Ascending aorta (tissue), 2 donors: ENCODE measurements at regions of chr7 and their contacts with region 1.

Region 1: GRCh38 chr7:75878769-75879611 is at the start of gene RHBDD2:
- DNase-seq: peak; percentile 84 to 98
- H3K4me3 ChIP-seq: peak within 1 kb of the TSS; percentile 67 to 93
- H3K27ac ChIP-seq: peak within 1 kb of the TSS; percentile 71 to 72
- H3K4me1 ChIP-seq: peaks cover 0 to 10% of the 10 kb centered on the region in 2 donors
- H3K27me3 ChIP-seq: no peaks in the 10 kb centered on the region
- CTCF ChIP-seq: peak in 1 of 3 experiments; percentile 35
- total RNA-seq, gene RHBDD2: 51.7 TPM

Region 2: GRCh38 chr7:75738987-75739795 is 139.8 kb before region 1 on chr7:
- intact Hi-C with region 1: loop called (anchors 5 kb)
- DNase-seq: peak; percentile 98 to 100
- H3K4me3 ChIP-seq: peak overlapping the region; percentile 79 to 81
- H3K27ac ChIP-seq: peak overlapping the region; percentile 76 to 84
- H3K4me1 ChIP-seq: peaks cover 0 to 18% of the 10 kb centered on the region in 2 donors
- H3K27me3 ChIP-seq: no peaks in the 10 kb centered on the region
- CTCF ChIP-seq: peak in 1 of 3 experiments; percentile 60

Region 3: GRCh38 chr7:75814407-75814947 is 64.5 kb before region 1 on chr7:
- intact Hi-C with region 1: no loop called
- DNase-seq: no peak
- H3K4me3 ChIP-seq: no peak overlapping the region
- H3K27ac ChIP-seq: no peak overlapping the region
- H3K4me1 ChIP-seq: no peaks in the 10 kb centered on the region
- H3K27me3 ChIP-seq: no peaks in the 10 kb centered on the region
- CTCF ChIP-seq: no peak

Region 4: DNA sequence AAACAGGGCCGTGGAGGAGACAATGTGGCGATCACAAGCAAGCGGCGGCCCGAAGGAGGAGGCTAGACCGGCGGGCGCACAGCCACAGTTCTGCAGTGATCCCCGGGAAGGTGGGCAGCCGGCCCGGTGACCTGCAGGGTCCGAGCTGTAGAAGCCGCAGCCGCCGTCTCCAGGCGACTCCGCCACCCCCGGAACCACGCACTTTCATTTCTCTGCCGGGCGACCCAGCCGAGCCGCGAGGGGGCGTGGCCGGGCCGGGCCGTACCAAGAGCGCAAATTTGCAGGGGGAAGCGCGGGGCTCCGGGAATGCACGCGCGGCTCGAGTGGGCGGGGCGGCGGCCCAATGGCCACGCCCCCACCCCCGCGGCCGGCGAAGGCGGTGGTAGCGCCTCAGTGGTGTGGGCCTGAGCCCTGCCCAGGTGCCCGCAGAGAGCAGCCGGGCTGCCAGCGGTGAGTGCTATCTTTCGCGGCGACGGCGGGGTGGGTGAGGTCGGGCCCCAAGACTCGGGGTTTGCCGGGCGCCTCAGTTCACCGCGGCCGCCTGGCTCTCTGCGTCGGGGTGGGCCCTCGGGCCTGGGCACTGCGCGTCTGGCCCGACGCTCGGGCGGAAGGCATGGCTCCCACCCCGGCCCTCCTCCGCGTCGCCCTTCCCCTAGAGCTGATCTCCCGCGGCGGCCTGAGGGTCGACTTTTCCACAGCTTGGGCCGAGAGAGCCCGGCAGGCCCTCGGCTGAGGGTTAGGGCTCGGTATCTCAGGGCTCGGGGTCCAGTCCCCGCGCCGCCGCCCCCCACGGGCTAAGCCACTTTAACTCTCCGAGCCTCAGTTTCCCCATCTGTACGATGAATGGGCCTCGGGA is 36.0 kb after region 1 on chr7 and contains the start of gene POR:
- intact Hi-C with region 1: loop called (anchors 1 kb)
- DNase-seq: peak; percentile 80 to 96
- H3K4me3 ChIP-seq: peak within 1 kb of the TSS; percentile 81 to 84
- H3K27ac ChIP-seq: peak within 1 kb of the TSS; percentile 81 to 84
- H3K4me1 ChIP-seq: peaks cover 3 to 5% of the 10 kb centered on the region in 2 donors
- H3K27me3 ChIP-seq: no peaks in the 10 kb centered on the region
- CTCF ChIP-seq: peak in 2 of 3 experiments; percentile 3 to 11
- total RNA-seq, gene POR: 236 TPM

Region 5: DNA sequence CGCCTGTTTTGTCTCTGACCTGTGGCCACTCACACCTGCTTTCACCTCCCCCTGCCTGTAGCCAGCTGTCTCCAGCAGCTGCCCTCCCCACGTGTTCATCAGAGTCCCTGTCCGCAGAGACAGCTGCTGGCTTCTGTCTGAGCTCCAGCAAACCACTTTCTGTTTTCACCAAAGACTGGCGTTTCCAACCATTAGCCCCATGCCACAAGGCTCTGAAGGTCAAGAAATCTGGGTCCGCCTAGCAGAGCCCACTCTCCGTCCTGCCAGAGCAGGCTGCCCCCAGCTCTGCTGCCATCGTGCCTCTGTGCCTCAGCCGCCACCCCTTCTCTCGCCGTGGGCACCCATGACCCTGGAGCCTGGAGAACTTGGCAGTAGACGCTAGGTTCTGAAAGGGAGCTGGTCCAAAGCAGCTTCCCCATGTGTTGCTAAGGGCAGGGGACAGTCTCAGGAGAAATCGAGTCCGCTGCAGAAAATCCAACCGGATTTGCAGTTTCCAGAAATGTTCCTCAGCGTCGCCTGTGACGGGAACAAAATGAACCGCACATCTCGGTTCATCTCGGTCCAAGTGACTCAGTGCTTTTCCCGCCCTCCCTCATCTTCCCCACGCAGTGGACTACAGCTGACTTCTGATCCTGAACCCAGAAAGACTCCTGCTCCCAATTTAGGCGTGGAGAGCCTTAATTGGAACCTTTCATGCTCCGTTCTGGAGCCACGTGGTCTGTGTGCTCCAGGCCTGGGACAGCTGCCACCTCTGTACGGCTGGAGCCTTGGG is 87.4 kb after region 1 on chr7:
- intact Hi-C with region 1: loop called (anchors 1 kb)
- DNase-seq: peak; percentile 63 to 92
- H3K4me3 ChIP-seq: peak overlapping the region; percentile 15 to 54
- H3K27ac ChIP-seq: peak overlapping the region; percentile 92 to 97
- H3K4me1 ChIP-seq: peaks cover 20 to 44% of the 10 kb centered on the region in 2 donors
- H3K27me3 ChIP-seq: no peaks in the 10 kb centered on the region
- CTCF ChIP-seq: no peak

Region 6: DNA sequence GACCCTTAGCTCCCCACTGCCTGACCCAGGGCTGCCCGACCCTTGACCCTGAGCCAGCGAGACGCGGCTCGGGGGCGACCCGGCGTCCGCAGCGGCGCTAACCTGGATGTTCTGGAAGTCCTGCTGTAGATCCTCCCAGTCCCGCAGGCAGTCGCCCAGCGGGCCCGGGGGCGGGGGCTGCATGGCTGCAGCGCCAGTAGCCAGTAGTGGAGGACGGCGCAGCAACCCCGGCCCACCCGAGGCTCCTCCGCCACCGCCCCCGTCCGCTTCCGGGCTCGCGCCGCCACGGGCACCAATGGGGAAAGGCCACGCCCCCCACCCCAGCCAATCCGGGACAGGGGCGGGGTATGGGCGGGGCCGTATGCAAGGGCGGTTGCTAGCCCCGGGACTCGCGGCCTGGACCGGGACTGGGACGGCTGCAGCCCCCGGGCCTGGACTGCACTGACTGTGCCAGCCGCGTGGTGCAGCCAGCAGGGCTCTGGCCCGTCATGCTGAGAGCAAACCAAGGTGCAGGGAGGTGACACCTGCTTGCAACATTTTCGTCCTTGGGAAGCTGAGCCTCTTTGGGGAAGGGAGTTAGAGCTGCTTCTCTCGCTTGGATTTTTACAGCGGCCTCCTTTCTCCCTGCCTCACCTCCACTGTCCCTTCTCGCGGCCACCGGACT is 115.5 kb after region 1 on chr7 and contains the start of gene TMEM120A:
- intact Hi-C with region 1: loop called (anchors 1 kb)
- DNase-seq: peak; percentile 84 to 98
- H3K4me3 ChIP-seq: peak within 1 kb of the TSS; percentile 92 to 93
- H3K27ac ChIP-seq: peak within 1 kb of the TSS; percentile 99 to 100
- H3K4me1 ChIP-seq: peaks cover 10 to 25% of the 10 kb centered on the region in 2 donors
- H3K27me3 ChIP-seq: no peaks in the 10 kb centered on the region
- CTCF ChIP-seq: peak; percentile 29 to 42 (median 31)
- total RNA-seq, gene TMEM120A: 24.2 TPM

Region 7: GRCh38 chr7:76291343-76292212 is 412.6 kb after region 1 on chr7:
- intact Hi-C with region 1: loop called (anchors 10 kb)
- DNase-seq: peak; percentile 81 to 97
- H3K4me3 ChIP-seq: peak overlapping the region; percentile 24 to 59
- H3K27ac ChIP-seq: peak overlapping the region; percentile 93 to 99
- H3K4me1 ChIP-seq: peaks cover 24 to 29% of the 10 kb centered on the region in 2 donors
- H3K27me3 ChIP-seq: no peaks in the 10 kb centered on the region
- CTCF ChIP-seq: peak; percentile 97 to 98 (median 97)